ENCODE measurements at regions of chr10 and their contacts with region 1.

Region 1: DNA sequence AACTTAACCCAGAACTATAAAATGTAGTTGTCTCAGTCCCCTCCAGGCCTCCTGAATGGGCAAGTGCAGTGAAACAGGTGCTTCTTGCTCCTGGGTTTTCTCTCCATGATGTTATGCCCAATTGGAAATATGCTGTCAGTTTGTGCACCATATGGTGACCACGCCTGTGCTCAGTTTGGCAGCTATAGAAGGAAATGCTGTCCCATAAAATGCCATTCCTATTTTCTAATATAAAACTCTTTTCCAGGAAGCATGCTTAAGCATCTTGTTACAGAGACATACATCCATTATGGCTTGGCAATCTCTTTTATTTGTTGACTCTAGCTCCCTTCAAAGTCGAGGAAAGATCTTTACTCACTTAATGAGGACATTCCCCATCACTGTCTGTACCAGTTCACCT is 45.2 kb downstream of the FGFBP3 start:
- DNase-seq: no peak
- H3K4me3 ChIP-seq: no peak overlapping the region
- CTCF ChIP-seq: no peak

Region 2: DNA sequence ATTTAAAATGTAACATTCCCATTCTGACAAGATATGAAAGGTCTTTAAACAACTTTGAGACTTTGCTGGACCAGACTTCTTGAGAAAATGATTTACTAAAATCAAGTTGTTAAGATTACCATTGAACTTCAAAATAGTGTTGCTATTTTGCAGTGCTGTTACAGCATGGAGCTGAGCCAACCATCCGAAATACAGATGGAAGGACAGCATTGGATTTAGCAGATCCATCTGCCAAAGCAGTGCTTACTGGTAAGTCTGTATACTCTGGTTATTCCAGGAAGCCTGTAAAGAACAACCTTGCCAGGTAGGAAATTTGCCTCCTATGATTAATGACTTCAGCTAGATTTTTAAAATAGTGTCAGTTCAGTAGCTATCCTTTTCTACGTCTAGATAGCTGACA is 47.1 kb before region 1 on chr10:
- in situ Hi-C with region 1: no loop called
- DNase-seq: no peak
- H3K4me3 ChIP-seq: no peak overlapping the region
- CTCF ChIP-seq: no peak

Region 3: GRCh38 chr10:91829268-91829667 is 34.8 kb before region 1 on chr10:
- in situ Hi-C with region 1: loop called (anchors 5 kb)
- DNase-seq: no peak
- H3K4me3 ChIP-seq: no peak overlapping the region
- CTCF ChIP-seq: no peak